Right ventricle myocardium superior (tissue), 1 donor: ENCODE measurements at regions of chr6 and their contacts with region 1.

Region 1: GRCh38 chr6:27472617-27473400 is at the start of gene ZNF184:
- DNase-seq: peak; percentile 96
- ATAC-seq: peak; percentile 100
- total RNA-seq, gene ZNF184: 3.7 TPM

Region 2: DNA sequence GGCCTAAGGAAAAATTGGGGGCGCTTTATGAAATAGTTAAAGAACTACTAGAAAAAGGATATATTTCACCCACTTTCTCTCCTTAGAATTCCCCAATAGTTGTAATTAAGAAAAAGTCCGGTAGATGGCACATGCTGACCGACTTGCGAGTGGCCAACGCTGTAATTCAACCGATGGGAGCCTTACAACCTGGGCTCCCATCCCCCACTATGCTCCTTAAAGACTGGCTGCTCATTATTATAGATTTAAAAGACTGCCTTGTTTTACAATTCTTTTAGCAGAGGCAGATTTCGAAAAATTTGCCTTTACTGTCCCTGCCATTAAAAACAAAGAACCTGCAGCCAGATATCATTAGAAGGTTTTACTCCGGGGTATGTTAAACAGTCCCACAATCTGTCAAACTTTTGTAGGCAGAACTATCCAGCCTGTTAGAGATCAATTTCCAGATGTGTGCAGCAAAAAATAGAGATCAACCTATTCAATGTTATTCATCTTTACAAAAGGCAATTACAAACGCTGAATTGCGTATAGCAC is 283.9 kb before region 1 on chr6:
- intact Hi-C with region 1: loop called (anchors 10 kb)
- DNase-seq: no peak
- ATAC-seq: peak; percentile 98